Lower lobe of right lung (tissue), 2 donors: ENCODE measurements at regions of chr4 and their contacts with region 1.

Region 1: DNA sequence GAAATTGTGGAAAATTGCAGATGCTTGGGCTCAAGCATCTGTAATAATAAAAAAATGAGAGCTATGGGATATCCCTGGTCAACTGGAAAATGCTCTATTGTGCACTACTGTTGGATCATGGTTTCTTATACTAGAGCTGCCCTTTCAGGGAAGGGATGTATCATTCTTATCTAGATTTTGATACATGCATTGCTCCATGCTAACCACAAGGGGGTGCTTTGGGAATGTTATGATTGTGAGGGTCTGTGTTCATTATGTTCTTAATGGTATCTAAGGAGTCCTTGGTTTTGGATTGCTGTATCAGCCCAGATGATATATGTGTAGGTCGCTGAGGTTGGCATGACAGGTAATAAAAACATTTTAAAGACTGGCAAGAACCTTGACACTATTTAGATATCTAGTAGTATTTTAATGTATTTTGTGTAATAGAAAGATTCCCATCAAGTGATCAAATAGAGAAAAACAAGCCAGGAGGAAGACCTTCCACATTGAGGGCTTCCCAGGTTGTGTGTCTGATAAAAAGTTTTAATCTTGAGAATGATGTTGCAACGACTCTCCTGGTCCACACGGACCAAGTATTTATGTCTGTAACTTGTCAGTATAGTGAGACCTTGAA is 49.2 kb upstream of the TLR2 start:
- DNase-seq: no peak
- ATAC-seq: peak; percentile 72 to 75
- H3K4me3 ChIP-seq: no peak overlapping the region
- H3K27ac ChIP-seq: no peak overlapping the region
- H3K4me1 ChIP-seq: no peaks in the 10 kb centered on the region
- H3K27me3 ChIP-seq: no peaks in the 10 kb centered on the region
- CTCF ChIP-seq: peak; percentile 73

Region 2: GRCh38 chr4:153750197-153750817 is 115.5 kb after region 1 on chr4:
- intact Hi-C with region 1: loop called (anchors 5 kb)
- DNase-seq: no peak
- ATAC-seq: peak; percentile 86 to 93
- H3K4me3 ChIP-seq: no peak overlapping the region
- H3K27ac ChIP-seq: no peak overlapping the region
- H3K4me1 ChIP-seq: peaks cover 5% of the 10 kb centered on the region
- H3K27me3 ChIP-seq: peaks cover 5% of the 10 kb centered on the region
- CTCF ChIP-seq: peak; percentile 72